Endothelial cell of umbilical vein (primary cell): ENCODE measurements at regions of chr13 and their contacts with region 1.

Region 1: GRCh38 chr13:35164324-35164932 is 222.4 kb downstream of the NBEA start:
- DNase-seq: peak; percentile 59
- H3K4me3 ChIP-seq: no peak overlapping the region
- H3K27ac ChIP-seq: no peak overlapping the region
- H3K4me1 ChIP-seq: no peaks in the 10 kb centered on the region
- H3K27me3 ChIP-seq: no peaks in the 10 kb centered on the region
- CTCF ChIP-seq: peak; percentile 25 to 26
- POLR2A ChIP-seq: no peak

Region 2: DNA sequence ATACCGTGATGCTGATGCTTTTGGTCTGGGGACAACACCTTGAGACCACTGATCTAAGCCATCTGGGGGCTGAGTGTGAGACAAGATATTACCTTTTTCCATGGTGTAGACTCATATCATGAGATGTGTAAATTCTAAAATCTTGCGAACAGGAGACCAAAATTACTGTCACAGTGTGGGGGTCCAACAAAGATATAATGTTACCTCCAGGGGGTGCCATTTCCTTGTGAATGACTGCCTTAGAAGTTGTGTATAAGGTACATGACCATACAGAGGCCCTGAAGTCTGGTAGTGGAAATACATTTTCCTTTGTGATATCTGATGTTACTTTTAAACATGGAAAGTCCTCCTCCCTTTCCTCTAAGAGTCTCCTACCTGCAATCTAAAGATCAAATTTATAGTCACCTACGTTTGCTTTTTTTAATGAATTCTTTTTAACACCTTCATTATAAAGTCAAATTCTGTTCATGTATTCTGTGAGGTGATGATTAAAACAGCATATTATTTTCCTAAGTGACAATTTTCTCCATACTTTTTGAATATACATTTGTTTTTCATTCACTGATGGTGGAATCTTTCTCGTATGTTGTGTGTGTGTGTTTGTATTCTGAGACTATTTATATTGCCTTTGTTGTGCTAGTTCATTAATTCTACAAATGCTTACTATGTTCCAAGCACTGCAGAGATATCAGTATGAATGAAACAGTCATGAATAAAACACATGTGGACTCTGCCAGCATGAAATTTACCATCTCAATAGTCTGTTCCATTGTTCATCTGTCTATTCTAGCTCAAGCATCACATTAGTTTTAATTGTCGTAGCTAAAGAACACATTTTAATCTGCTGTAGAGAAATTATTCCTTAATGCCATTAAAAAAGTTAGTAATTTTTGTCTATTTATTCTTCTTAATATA is 1232.8 kb before region 1 on chr13:
- CTCF ChIA-PET with region 1: interaction called, 53 read pairs
- POLR2A ChIA-PET with region 1: no interaction called
- dilution Hi-C with region 1: no loop called
- intact Hi-C with region 1: loop called (anchors 2 kb)
- DNase-seq: peak; percentile 39
- H3K4me3 ChIP-seq: no peak overlapping the region
- H3K27ac ChIP-seq: no peak overlapping the region
- H3K4me1 ChIP-seq: no peaks in the 10 kb centered on the region
- H3K27me3 ChIP-seq: no peaks in the 10 kb centered on the region
- CTCF ChIP-seq: peak in 1 of 2 donors; percentile 52
- POLR2A ChIP-seq: no peak

Region 3: DNA sequence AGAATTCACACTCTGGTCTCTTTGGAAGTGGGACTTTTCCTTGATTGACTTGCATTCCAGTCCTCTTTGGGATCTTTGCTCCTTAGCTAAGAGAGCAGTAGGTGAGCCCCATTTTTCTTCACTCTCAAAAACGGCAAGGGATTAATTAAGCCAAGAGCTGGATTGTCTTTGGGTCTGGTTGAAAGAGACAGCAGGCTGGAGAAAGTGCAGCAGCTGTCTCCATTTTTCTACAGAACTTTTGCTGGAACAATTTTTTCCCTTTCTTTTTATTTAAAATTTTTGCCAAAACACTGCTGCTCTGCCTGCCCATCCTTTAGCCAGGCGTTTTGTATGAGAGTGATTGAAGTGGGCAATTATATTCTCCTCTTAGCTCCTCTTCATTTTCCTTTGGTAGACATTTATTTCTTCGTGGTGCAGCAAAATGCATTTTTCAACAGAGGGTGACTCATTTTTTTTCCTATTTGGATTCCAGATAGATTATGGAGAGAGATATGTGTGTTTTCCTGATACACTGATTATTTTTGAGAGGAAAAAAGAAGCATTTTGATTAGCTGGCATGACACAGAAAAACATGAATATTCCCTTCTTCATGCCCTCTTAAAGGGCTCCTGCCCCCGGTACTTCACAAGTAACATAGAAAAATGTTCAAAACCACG is 593.6 kb before region 1 on chr13:
- CTCF ChIA-PET with region 1: no interaction called
- POLR2A ChIA-PET with region 1: no interaction called
- dilution Hi-C with region 1: no loop called
- intact Hi-C with region 1: no loop called
- DNase-seq: no peak
- H3K4me3 ChIP-seq: no peak overlapping the region
- H3K27ac ChIP-seq: no peak overlapping the region
- H3K4me1 ChIP-seq: no peaks in the 10 kb centered on the region
- H3K27me3 ChIP-seq: no peaks in the 10 kb centered on the region
- CTCF ChIP-seq: no peak
- POLR2A ChIP-seq: no peak

Region 4: DNA sequence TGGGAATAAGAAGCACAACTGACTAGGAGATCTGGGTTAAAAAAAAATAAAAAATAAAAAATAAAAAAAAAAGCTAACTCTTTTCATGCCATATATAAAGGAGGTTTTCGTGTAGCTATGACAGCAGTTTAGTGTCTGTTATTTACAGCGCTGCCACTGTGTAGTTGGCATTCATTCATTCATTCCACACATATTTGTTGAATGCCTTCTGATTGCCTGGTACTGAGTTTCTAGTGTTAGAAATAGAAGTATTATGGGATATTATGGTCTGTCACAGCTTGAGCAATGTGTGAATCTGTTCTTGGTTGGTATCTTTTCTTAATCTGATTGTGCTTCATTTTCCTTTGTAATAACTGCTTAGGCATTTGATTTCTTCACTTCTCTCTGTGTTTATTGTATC is 15.1 kb after region 1 on chr13:
- CTCF ChIA-PET with region 1: interaction called, 15 read pairs
- POLR2A ChIA-PET with region 1: no interaction called
- dilution Hi-C with region 1: no loop called
- intact Hi-C with region 1: no loop called
- DNase-seq: no peak
- H3K4me3 ChIP-seq: no peak overlapping the region
- H3K27ac ChIP-seq: no peak overlapping the region
- H3K4me1 ChIP-seq: no peaks in the 10 kb centered on the region
- H3K27me3 ChIP-seq: no peaks in the 10 kb centered on the region
- CTCF ChIP-seq: no peak
- POLR2A ChIP-seq: no peak